ENCODE measurements at regions of chr10 and their contacts with region 1.

Region 1: GRCh38 chr10:80187465-80188409 is 17.6 kb downstream of the ANXA11 start:
- DNase-seq: peak; percentile 88
- ATAC-seq: peak; percentile 80
- H3K4me3 Mint-ChIP-seq: peak overlapping the region; percentile 60
- H3K27ac Mint-ChIP-seq: peak overlapping the region; percentile 91
- H3K4me1 Mint-ChIP-seq: peaks cover 85% of the 10 kb centered on the region
- H3K27me3 Mint-ChIP-seq: no peaks in the 10 kb centered on the region

Region 2: GRCh38 chr10:79331709-79332108 is 856.0 kb before region 1 on chr10:
- CTCF ChIA-PET with region 1: no interaction called
- POLR2A ChIA-PET with region 1: no interaction called
- intact Hi-C with region 1: loop called in 1 of 2 experiments (anchors 5 kb)
- DNase-seq: peak; percentile 93
- ATAC-seq: peak; percentile 98
- H3K4me3 Mint-ChIP-seq: peak overlapping the region; percentile 9
- H3K27ac Mint-ChIP-seq: peak overlapping the region; percentile 90
- H3K4me1 Mint-ChIP-seq: peaks cover 40% of the 10 kb centered on the region
- H3K27me3 Mint-ChIP-seq: no peaks in the 10 kb centered on the region

Region 3: DNA sequence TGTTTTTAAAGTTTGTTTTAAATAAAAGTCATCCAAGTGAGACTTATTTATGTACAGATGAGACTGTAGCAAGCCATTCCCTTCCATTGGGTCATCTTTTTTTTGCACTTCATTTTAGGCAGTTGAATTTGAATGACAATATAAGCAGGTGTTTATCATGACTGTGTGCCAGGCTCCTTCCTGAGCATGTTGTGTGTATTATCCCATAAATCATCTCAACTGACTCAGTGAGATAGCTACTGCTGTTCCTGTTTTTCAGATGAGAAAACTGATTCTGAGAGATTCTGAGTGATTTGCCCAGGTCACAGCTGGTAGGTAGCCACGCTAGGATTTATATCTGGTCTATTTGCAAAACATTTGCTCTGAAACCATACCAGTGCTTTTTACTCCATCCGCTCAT is 97.6 kb before region 1 on chr10:
- CTCF ChIA-PET with region 1: no interaction called
- POLR2A ChIA-PET with region 1: no interaction called
- intact Hi-C with region 1: no loop called
- DNase-seq: no peak
- ATAC-seq: no peak
- H3K4me3 Mint-ChIP-seq: no peak overlapping the region
- H3K27ac Mint-ChIP-seq: no peak overlapping the region
- H3K4me1 Mint-ChIP-seq: no peaks in the 10 kb centered on the region
- H3K27me3 Mint-ChIP-seq: no peaks in the 10 kb centered on the region

Region 4: DNA sequence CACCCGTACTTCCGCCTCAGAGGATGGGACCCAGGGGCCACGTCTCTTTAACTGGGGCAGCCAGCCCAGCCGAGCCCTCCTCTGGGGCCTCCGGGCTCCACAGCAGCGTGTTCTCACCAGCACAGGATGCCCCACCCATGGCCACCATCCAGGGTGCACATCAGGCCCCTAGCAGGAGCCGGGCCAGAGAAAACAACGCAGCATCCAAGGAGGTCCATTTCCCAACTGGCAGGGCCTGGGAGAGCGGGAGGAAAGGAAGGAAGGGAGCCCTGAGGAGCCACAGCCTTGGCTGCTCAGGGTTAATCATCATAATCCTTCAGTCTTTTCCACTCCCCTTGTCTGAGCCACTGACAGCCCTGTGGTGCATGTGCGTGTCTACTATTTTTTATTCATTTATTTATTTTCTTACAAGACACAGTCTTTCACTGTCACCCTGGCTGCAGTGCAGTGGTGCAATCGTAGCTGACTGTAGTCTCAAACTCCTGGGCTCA is 51.6 kb before region 1 on chr10:
- CTCF ChIA-PET with region 1: no interaction called
- POLR2A ChIA-PET with region 1: no interaction called
- intact Hi-C with region 1: no loop called
- DNase-seq: no peak
- ATAC-seq: no peak
- H3K4me3 Mint-ChIP-seq: no peak overlapping the region
- H3K27ac Mint-ChIP-seq: no peak overlapping the region
- H3K4me1 Mint-ChIP-seq: peaks cover 4% of the 10 kb centered on the region
- H3K27me3 Mint-ChIP-seq: peaks cover 28% of the 10 kb centered on the region

Region 5: GRCh38 chr10:80158598-80159127 is 29.1 kb before region 1 on chr10:
- CTCF ChIA-PET with region 1: no interaction called
- POLR2A ChIA-PET with region 1: no interaction called
- intact Hi-C with region 1: no loop called
- DNase-seq: no peak
- ATAC-seq: no peak
- H3K4me3 Mint-ChIP-seq: no peak overlapping the region
- H3K27ac Mint-ChIP-seq: peak overlapping the region; percentile 18
- H3K4me1 Mint-ChIP-seq: peaks cover 10% of the 10 kb centered on the region
- H3K27me3 Mint-ChIP-seq: no peaks in the 10 kb centered on the region

Region 6: GRCh38 chr10:80173466-80173865 is 14.3 kb before region 1 on chr10:
- CTCF ChIA-PET with region 1: interaction called, 12 read pairs
- POLR2A ChIA-PET with region 1: interaction called, 4 read pairs
- intact Hi-C with region 1: no loop called
- DNase-seq: no peak
- ATAC-seq: no peak
- H3K4me3 Mint-ChIP-seq: no peak overlapping the region
- H3K27ac Mint-ChIP-seq: no peak overlapping the region
- H3K4me1 Mint-ChIP-seq: peaks cover 20% of the 10 kb centered on the region
- H3K27me3 Mint-ChIP-seq: no peaks in the 10 kb centered on the region